ENCODE measurements at regions of chr10 and their contacts with region 1.

Region 1: DNA sequence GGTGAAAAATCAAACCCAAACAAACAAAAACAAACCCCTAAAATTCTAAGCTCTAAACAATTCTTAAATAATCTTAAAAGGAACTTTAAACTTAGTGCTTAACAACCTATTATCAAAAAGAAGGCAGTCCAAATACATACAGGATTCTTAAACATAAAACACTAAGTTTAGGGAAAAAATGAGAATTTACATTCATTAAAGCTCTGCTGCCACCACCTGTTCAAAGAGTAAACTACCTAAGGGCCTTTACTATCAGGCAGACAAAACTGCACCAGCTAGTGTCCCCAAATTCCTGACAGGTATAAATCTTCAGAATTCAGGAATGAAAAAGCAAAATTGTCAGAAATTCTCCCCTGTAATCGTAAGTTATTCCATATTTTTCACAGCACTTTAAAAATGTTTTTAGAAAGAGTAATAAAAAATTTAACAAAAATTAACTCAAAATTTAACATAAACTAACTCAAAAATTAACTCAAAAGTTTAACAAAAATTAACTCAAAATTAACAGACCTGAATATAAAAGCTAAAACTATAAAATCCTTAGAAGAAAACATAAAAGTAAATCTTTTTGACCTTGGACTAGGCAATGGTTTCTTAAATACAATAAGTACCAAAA is 55.1 kb downstream of the PDZD8 start:
- DNase-seq: no peak

Region 2: DNA sequence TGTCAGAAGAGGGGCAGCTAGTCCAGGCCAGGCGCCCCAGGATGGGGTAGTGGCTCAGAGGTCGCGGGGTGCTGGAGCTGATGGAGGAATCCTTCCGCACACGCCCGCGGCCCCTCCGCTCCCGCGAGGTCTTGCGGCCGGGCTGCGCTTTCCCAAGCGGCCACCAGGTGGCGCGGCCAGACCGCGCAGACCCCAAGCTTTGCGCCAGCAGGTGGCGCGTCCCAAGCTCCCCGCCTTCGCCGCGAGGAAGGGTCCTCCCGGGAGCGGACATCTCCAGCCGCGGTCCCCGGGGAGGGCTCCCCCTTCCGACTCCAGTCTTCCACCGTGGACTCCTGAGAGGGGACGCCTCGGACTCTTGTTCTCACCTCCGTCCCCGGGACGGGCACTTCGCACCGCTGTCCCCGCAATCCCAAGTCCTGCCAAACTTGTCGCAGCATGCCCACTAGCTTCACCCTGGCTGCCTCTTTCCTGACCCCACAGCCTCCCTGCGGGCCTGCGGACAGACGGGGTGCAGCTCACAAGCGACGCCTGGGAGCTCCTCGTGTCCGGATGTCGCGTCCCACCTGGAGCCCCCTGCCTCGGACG is 103.5 kb before region 1 on chr10:
- intact Hi-C with region 1: loop called (anchors 1 kb)
- DNase-seq: peak; percentile 37 to 95 (median 68)